Activated CD4-positive, alpha-beta T cell treated with anti-CD3 and anti-CD28 coated beads, Interleukin-2, amount 10 ng/mL, durations not matched to agents 7 days and 5 days (primary cell): ENCODE measurements at regions of chr11 and their contacts with region 1.

Region 1: DNA sequence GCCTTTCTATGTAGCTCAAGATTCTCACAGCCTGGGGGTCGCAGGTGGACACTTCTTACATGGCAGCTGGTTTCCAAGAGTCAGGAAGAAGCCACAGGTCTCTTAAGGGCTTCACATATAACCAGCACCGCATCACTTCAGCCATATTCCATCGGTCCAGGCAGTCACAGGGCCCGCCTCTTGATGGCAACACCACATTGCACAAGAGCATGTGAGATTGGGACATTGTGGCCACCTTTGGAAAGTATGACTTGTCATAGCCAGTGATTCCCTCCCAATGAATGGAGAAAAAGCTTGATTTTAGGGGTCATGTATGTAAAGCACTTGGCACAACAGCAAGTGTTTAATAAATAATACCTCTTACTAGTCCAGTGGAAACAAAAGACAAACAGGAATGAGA is 98.3 kb downstream of the NCAM1 start:
- DNase-seq: no peak
- H3K4me3 Mint-ChIP-seq: no peak overlapping the region
- H3K27ac Mint-ChIP-seq: no peak overlapping the region
- H3K4me1 Mint-ChIP-seq: no peaks in the 10 kb centered on the region
- H3K27me3 Mint-ChIP-seq: no peaks in the 10 kb centered on the region

Region 2: DNA sequence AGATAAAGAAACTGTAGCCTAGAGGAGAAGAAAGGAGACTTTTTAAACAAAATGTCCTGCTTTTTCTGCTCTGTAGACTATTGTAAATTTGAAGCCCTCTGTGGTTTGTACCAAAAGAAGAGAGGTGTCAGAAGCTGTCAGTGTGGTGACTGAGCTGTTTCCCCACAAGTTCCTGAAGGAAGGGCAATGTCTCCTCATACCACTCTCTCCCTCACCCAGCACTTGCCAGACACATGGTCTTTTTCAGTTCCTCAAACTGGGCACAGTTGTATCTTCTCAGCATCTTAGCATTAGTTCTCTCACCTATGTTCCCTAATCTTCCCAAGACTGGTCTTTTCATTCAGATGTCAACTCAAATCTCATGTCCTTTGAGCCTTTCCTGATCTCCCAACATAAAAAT is 879.9 kb before region 1 on chr11:
- CTCF ChIA-PET with region 1: no interaction called
- POLR2A ChIA-PET with region 1: interaction called, 10 read pairs
- DNase-seq: no peak
- H3K4me3 Mint-ChIP-seq: no peak overlapping the region
- H3K27ac Mint-ChIP-seq: no peak overlapping the region
- H3K4me1 Mint-ChIP-seq: peaks cover 9% of the 10 kb centered on the region
- H3K27me3 Mint-ChIP-seq: peaks cover 30% of the 10 kb centered on the region